ENCODE measurements at regions of chr5 and their contacts with region 1.

Region 1: GRCh38 chr5:110757118-110757729 is 18.4 kb downstream of the SLC25A46 start:
- DNase-seq: peak; percentile 60
- ATAC-seq: peak; percentile 63; the same call in 1 of the 2 replicates
- H3K4me3 ChIP-seq: no peak overlapping the region
- H3K27ac ChIP-seq: no peak overlapping the region
- H3K4me1 ChIP-seq: no peaks in the 10 kb centered on the region
- H3K27me3 ChIP-seq: no peaks in the 10 kb centered on the region
- CTCF ChIP-seq: peak; percentile 72
- POLR2A ChIP-seq: no peak
- RAD21 ChIP-seq: peak; percentile 70

Region 2: GRCh38 chr5:111072949-111073682 is 315.9 kb after region 1 on chr5:
- CTCF ChIA-PET with region 1: interaction called, 3 read pairs
- POLR2A ChIA-PET with region 1: no interaction called
- dilution Hi-C with region 1: no loop called
- in situ Hi-C with region 1: no loop called
- intact Hi-C with region 1: loop called (anchors 1 kb)
- DNase-seq: peak; percentile 28
- ATAC-seq: peak; percentile 81
- H3K4me3 ChIP-seq: peak overlapping the region; percentile 53
- H3K27ac ChIP-seq: peak overlapping the region; percentile 21
- H3K4me1 ChIP-seq: peaks cover 12% of the 10 kb centered on the region
- H3K27me3 ChIP-seq: no peaks in the 10 kb centered on the region
- CTCF ChIP-seq: no peak
- POLR2A ChIP-seq: no peak
- RAD21 ChIP-seq: peak; percentile 16; the same call in 1 of the 2 replicates

Region 3: GRCh38 chr5:111099058-111099778 is 342.0 kb after region 1 on chr5:
- CTCF ChIA-PET with region 1: no interaction called
- POLR2A ChIA-PET with region 1: no interaction called
- dilution Hi-C with region 1: no loop called
- in situ Hi-C with region 1: loop called (anchors 10 kb)
- intact Hi-C with region 1: loop called (anchors 5 kb)
- DNase-seq: peak; percentile 62
- ATAC-seq: peak; percentile 75
- H3K4me3 ChIP-seq: no peak overlapping the region
- H3K27ac ChIP-seq: peak overlapping the region; percentile 37; the same call in 1 of the 2 replicates
- H3K4me1 ChIP-seq: peaks cover under 1% of the 10 kb centered on the region; the same call in 1 of the 2 replicates
- H3K27me3 ChIP-seq: no peaks in the 10 kb centered on the region
- CTCF ChIP-seq: no peak
- POLR2A ChIP-seq: no peak
- RAD21 ChIP-seq: no peak

Region 4: DNA sequence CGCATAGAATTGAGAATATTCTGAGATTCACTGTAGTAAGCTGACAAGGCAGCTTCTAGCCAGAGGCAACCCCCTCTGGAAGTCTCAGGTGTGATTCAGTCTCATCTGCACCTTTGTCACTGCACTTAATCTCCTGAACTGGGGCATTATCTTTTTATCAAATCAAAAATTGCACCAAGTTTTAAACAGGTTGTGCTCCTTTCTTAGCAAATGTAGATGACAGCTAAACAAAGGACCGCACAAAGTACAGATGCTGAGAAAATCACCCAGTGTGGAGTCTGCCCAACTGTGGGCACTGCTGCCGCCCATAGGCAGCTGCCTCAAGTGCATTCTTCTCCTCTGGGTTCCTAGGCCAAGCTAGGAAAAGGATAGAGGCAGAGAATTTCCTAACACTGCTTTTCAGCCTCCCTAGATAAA is 704.0 kb after region 1 on chr5:
- CTCF ChIA-PET with region 1: no interaction called
- POLR2A ChIA-PET with region 1: no interaction called
- dilution Hi-C with region 1: no loop called
- in situ Hi-C with region 1: loop called (anchors 25 kb)
- intact Hi-C with region 1: no loop called
- DNase-seq: peak; percentile 25
- ATAC-seq: peak; percentile 89
- H3K4me3 ChIP-seq: no peak overlapping the region
- H3K27ac ChIP-seq: no peak overlapping the region
- H3K4me1 ChIP-seq: no peaks in the 10 kb centered on the region
- H3K27me3 ChIP-seq: no peaks in the 10 kb centered on the region
- CTCF ChIP-seq: peak; percentile 62
- POLR2A ChIP-seq: no peak
- RAD21 ChIP-seq: peak; percentile 75

Region 5: DNA sequence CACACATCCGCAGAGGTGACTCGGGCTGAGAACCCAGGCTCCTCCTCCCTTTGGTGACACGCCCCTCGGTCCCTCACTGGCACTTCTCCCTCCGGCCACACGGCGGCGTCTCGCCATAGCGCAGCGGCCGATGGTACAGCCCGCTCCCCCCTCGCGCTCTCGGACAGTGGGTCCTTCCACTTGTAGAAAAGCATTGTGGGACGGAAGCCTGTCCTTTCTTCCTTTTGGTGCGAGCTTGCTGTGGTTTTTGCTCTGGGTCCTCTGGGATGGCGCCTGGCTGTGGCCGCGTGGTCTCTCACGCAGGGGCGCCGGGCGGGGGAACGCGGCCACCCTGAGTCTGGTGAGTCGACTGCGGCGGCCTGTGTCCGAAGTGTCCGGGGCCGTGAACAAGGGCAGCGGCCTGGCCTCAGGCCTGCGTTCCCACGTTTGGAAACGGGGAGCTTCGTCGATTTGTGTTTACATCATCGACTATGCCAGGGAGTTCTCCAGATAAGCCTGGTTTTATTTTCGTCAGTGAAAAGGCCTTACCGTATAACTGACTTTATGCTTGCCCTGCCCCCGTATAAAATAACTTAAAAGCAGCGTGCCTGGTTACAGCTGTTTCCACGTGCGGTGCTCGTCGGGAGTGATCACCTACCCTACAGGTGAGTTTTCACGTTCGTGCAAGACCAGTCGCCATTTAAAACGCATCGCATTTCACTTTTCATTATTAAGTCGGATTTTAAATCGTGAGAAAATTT is 1403.6 kb after region 1 on chr5:
- CTCF ChIA-PET with region 1: no interaction called
- POLR2A ChIA-PET with region 1: no interaction called
- dilution Hi-C with region 1: no loop called
- in situ Hi-C with region 1: loop called (anchors 25 kb)
- intact Hi-C with region 1: no loop called
- DNase-seq: peak; percentile 88
- ATAC-seq: peak; percentile 100
- H3K4me3 ChIP-seq: peak overlapping the region; percentile 80
- H3K27ac ChIP-seq: peak overlapping the region; percentile 74
- H3K4me1 ChIP-seq: no peaks in the 10 kb centered on the region; the same call in 1 of the 2 replicates
- H3K27me3 ChIP-seq: no peaks in the 10 kb centered on the region
- CTCF ChIP-seq: peak; percentile 100
- POLR2A ChIP-seq: peak; percentile 99
- RAD21 ChIP-seq: no peak; the same call in 1 of the 2 replicates

Measured in IMR-90 (cell line).